ENCODE measurements at regions of chr7 and their contacts with region 1.

Region 1: DNA sequence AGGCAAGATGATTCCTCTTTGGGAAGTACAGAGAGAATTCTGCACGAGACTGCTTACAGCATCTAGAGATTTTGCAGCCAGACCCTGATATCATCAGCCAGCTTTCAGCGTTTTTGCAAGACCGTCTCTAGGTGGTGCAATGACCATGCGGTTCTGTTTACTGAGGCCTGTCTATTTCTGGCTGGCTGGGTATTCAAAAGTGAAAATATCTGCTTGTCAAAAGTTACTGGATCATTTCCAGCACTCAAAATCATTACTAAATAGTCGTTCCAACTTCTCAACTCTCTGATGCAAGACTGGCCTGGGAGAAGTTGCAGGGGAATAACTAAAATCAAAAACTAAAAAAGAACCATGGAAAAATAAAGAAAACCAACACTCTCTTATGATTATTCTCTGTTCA is 240.1 kb downstream of the ELMO1 start:
- DNase-seq: peak; percentile 43
- ATAC-seq: peak; percentile 95
- H3K4me3 ChIP-seq: no peak overlapping the region
- H3K27ac ChIP-seq: no peak overlapping the region
- H3K4me1 ChIP-seq: no peaks in the 10 kb centered on the region
- H3K27me3 ChIP-seq: 0 out of 2 replicates have a peak, but pooled peaks cover 5% of the 10 kb centered on the region
- CTCF ChIP-seq: peak; percentile 43 to 62 (median 45); a peak in 5 of 6 replicates
- POLR2A ChIP-seq: no peak
- RAD21 ChIP-seq: peak; percentile 75

Region 2: DNA sequence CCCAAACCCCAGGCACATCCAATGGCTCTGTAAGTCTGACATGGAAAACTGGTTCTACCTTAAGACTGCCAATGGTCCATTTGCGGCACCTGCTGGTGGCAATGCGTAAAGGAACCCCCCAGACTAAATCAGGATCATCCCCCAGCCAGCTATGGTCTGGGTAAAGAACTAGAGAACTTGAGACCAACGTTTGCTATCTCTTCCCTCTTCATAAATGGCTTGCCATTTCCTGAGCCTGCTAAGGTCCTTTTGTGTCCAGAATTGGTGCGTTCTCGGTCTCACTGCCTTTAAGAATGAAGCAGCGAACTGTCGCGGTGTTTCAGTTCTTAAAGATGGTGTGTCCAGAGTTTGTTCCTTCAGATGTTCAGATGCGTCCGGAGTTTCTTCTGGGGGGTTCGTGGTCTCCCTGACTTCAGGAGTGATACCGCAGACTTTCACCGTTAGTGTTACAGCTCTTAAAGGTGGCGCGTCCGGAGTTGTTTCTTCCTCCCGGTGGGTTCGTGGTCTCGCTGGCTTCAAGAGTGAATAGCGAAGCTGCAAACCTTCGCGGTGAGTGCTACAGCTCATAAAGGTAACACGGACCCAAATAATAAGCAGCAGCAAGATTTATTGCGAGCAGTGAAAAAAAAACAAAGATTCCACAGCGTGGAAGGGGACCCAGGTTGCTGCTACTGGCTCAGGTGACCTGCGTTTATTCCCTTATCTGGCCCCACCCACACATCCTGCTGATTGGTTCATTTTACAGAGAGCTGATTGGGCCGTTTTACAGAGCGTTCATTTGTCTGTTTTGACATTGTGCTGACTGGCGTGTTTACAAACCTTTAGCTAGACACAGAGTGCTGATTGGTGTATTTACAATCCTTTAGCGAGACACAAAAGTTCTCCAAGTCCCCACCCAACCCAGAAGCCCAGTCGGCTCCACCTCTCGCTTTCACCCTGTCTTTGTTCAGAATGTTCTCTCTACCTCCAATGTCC is 144.7 kb after region 1 on chr7:
- CTCF ChIA-PET with region 1: no interaction called
- POLR2A ChIA-PET with region 1: no interaction called
- RAD21 ChIA-PET with region 1: no interaction called
- intact Hi-C with region 1: loop called (anchors 2 kb)
- DNase-seq: peak; percentile 15
- ATAC-seq: peak; percentile 82
- H3K4me3 ChIP-seq: no peak overlapping the region
- H3K27ac ChIP-seq: no peak overlapping the region
- H3K4me1 ChIP-seq: no peaks in the 10 kb centered on the region
- H3K27me3 ChIP-seq: peaks cover 8% of the 10 kb centered on the region; the same call in 1 of the 2 replicates
- CTCF ChIP-seq: peak; percentile 48 to 68 (median 63); a peak in 5 of 6 replicates
- POLR2A ChIP-seq: no peak
- RAD21 ChIP-seq: peak; percentile 66

Region 3: GRCh38 chr7:37510043-37510634 is 301.6 kb after region 1 on chr7:
- CTCF ChIA-PET with region 1: interaction called, 3 read pairs
- POLR2A ChIA-PET with region 1: no interaction called
- RAD21 ChIA-PET with region 1: no interaction called
- intact Hi-C with region 1: loop called (anchors 1 kb)
- DNase-seq: no peak
- ATAC-seq: no peak
- H3K4me3 ChIP-seq: no peak overlapping the region
- H3K27ac ChIP-seq: no peak overlapping the region
- H3K4me1 ChIP-seq: no peaks in the 10 kb centered on the region
- H3K27me3 ChIP-seq: peaks cover 18% of the 10 kb centered on the region
- CTCF ChIP-seq: peak; percentile 17 to 67 (median 63); a peak in 5 of 6 replicates
- POLR2A ChIP-seq: no peak
- RAD21 ChIP-seq: peak; percentile 30

Region 4: DNA sequence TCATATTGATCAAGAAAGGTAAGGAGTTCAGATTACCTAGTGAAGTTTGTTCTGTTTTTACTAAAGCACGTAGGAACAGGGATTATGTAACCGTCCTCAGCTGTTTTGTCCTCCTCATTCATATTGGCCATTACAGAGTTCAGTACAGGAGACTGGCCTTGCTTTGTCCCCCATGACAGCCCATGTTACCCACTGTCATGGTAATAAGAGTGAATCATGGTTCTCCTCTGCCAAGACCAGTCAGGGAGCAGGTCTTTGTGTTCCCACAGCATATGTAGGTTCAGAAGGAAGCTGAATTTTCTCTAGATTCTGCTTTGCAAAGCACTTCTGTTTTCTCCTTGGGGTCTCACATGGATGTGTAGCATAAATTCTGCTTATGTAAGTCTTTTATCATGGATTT is 368.9 kb after region 1 on chr7:
- CTCF ChIA-PET with region 1: no interaction called
- POLR2A ChIA-PET with region 1: no interaction called
- RAD21 ChIA-PET with region 1: no interaction called
- intact Hi-C with region 1: no loop called
- DNase-seq: no peak
- ATAC-seq: no peak
- H3K4me3 ChIP-seq: no peak overlapping the region
- H3K27ac ChIP-seq: no peak overlapping the region
- H3K4me1 ChIP-seq: no peaks in the 10 kb centered on the region
- H3K27me3 ChIP-seq: 0 out of 2 replicates have a peak, but pooled peaks cover 6% of the 10 kb centered on the region
- CTCF ChIP-seq: no peak
- POLR2A ChIP-seq: no peak
- RAD21 ChIP-seq: no peak

Region 5: DNA sequence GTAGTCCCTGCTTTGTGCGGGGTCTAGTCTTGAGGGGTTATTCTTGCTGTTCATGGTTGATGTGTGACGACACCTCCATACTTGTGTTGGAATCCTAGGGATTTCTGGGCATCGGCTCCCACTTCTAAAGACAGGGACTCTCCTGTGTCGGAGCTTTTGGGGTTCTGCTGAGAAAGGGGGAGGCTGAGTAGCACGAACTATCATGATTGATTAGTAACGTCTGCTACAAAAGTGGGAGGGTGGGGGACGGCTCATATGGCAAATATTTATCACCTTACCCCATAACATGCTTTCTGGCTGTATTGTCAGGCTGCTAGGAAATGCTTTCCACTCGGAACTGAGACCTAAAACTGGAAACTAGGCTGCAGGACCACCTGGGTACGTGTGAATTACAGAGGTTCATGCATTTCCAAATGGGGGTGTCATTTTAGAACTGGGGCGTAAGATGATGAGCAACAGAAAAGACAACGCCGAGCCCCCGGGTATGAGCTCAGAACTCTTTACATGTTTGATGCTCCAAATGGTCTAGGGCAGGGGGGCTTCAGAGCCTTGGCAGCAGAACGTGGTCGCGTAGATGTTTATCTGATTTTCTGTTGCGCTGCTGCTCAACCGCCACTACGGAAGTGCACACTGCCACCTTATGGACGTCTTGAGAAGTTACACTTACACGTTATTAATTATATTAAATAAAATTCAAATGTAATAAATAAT is 624.7 kb after region 1 on chr7:
- CTCF ChIA-PET with region 1: no interaction called
- POLR2A ChIA-PET with region 1: no interaction called
- RAD21 ChIA-PET with region 1: no interaction called
- intact Hi-C with region 1: loop called (anchors 5 kb)
- DNase-seq: peak; percentile 7
- ATAC-seq: peak; percentile 49; the same call in 1 of the 2 replicates
- H3K4me3 ChIP-seq: no peak overlapping the region
- H3K27ac ChIP-seq: no peak overlapping the region
- H3K4me1 ChIP-seq: peaks cover 0 to 3% of the 10 kb centered on the region in 2 experiments; a peak in 1 of 4 replicates
- H3K27me3 ChIP-seq: no peaks in the 10 kb centered on the region; the same call in 1 of the 2 replicates
- CTCF ChIP-seq: peak; percentile 26 to 58 (median 47); a peak in 5 of 6 replicates
- POLR2A ChIP-seq: no peak
- RAD21 ChIP-seq: peak; percentile 61